ENCODE measurements at regions of chrX and their contacts with region 1.

Region 1: GRCh38 chrX:105723966-105724735 is 98.2 kb upstream of the NRK start:
- DNase-seq: no peak
- H3K4me3 ChIP-seq: no peak overlapping the region
- H3K27ac ChIP-seq: no peak overlapping the region
- H3K4me1 ChIP-seq: no peaks in the 10 kb centered on the region
- H3K27me3 ChIP-seq: no peaks in the 10 kb centered on the region
- CTCF ChIP-seq: no peak

Region 2: DNA sequence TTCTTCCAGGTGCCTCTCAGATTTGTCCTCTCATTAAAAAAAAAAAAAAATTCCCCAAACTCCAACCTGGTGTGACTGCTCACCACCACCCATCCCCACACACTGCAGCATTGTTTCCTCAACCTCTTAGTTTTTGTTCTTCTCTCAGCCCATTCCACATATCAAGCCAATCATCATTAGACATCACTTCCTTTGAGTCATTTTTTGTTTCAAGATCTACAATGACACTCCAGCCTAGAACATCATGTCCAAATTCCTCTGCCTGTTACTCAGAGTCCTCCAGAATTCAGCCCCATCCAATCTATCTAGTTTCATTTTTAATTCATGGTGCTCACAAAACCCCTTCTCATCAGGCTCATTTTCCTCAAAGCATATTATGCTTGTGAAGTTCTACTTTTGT is 241.1 kb before region 1 on chrX:
- CTCF ChIA-PET with region 1: no interaction called
- dilution Hi-C with region 1: no loop called
- in situ Hi-C with region 1: no loop called
- intact Hi-C with region 1: no loop called
- DNase-seq: peak; percentile 95
- H3K4me3 ChIP-seq: peak overlapping the region in 1 of 3 experiments; percentile 2
- H3K27ac ChIP-seq: peak overlapping the region; percentile 99
- H3K4me1 ChIP-seq: peaks cover 43% of the 10 kb centered on the region
- H3K27me3 ChIP-seq: no peaks in the 10 kb centered on the region
- CTCF ChIP-seq: no peak

Region 3: DNA sequence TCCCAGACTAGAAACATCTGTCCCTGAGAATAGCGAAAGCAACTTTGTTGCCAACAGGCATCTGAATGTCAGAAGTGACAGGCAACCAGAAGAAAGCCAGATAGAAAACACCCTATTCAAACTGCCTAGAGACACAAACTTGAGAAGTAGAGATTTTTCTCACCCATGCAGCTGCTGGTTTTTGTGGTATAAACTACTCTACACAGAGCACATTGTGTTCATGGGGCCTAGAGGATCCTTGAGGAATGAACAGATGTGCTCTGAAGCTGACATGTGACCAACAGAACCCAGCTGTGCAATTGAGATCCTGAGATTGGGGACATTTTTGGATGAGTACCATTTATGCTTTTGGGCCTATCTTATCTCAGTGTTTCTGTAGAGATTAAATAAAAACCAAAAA is 34.6 kb after region 1 on chrX:
- CTCF ChIA-PET with region 1: no interaction called
- dilution Hi-C with region 1: loop called (anchors 5 kb)
- in situ Hi-C with region 1: no loop called
- intact Hi-C with region 1: no loop called
- DNase-seq: no peak
- H3K4me3 ChIP-seq: no peak overlapping the region
- H3K27ac ChIP-seq: no peak overlapping the region
- H3K4me1 ChIP-seq: no peaks in the 10 kb centered on the region
- H3K27me3 ChIP-seq: peaks cover 2% of the 10 kb centered on the region
- CTCF ChIP-seq: no peak

Measured in mammary epithelial cell (primary cell).